Activated T-helper 1 cell treated with anti-CD3 and anti-CD28 coated beads, Interleukin-12 subunit alpha, Interleukin-12 subunit beta, Interleukin-2, Interleukin-4 antibody, amounts not matched to agents 30 ng/mL and 10 ng/mL and 1 ng/mL, durations not matched to agents 14 hours and 24 hours and 36 hours (primary cell): ENCODE measurements at regions of chr1 and their contacts with region 1.

Region 1: GRCh38 chr1:154335025-154335714 is 9.8 kb downstream of the ATP8B2 start:
- DNase-seq: peak; percentile 78
- H3K4me3 Mint-ChIP-seq: no peak overlapping the region
- H3K27ac Mint-ChIP-seq: peak overlapping the region; percentile 75
- H3K4me1 Mint-ChIP-seq: peaks cover 65% of the 10 kb centered on the region
- H3K27me3 Mint-ChIP-seq: no peaks in the 10 kb centered on the region

Region 2: GRCh38 chr1:154198756-154199562 is 136.2 kb before region 1 on chr1:
- intact Hi-C with region 1: loop called (anchors 1 kb)
- DNase-seq: no peak
- H3K4me3 Mint-ChIP-seq: no peak overlapping the region
- H3K27ac Mint-ChIP-seq: no peak overlapping the region
- H3K4me1 Mint-ChIP-seq: no peaks in the 10 kb centered on the region
- H3K27me3 Mint-ChIP-seq: peaks cover 6% of the 10 kb centered on the region

Region 3: DNA sequence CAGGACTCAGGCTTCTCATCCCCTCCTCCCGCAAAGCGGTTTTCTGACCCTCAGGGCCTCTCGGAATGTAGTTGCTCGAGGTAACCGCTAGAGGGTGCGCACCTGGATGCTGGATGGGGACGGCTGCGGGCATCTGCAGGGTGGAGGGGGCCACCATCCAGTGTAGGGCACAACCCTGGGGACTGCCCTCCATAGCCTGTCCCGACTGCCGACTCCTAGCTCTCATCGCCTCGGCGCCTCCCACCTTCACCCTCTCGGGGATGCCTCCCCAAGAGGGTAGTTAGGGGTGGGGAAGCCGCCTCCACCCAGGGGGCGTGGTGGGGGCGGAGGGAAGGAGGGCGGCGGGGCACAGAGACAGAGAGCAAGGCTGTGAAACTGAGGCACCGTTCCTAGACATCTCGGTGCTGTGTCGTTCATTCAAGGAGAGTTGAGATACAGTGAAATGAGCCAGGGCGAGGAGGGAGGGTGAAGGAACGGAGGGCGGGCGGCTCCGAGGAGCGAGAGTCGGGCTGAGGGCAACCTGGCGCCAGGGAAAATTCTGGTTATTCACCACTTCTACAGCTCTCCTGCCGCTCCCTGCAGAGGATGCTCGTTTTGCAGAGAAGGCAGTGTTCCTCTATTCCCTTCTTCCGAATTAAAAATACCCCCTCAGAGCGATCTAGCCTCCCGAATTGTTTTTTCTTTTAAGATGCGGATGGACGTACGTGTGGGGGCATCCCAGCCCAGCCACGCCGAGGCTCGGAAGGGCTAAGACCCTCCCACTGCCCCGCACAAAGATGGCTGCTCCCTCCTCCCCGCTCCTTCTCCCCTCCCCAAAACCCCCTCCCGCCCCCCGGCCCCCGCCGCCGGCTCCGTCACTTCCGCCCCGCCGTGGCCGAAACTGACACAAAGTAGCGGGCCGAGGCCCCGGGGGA is 10.2 kb before region 1 on chr1 and contains the start of gene ATP8B2:
- intact Hi-C with region 1: loop called (anchors 1 kb)
- DNase-seq: peak; percentile 74
- H3K4me3 Mint-ChIP-seq: peak within 1 kb of the TSS; percentile 96
- H3K27ac Mint-ChIP-seq: peak within 1 kb of the TSS; percentile 89
- H3K4me1 Mint-ChIP-seq: peaks cover 35% of the 10 kb centered on the region
- H3K27me3 Mint-ChIP-seq: peaks cover 22% of the 10 kb centered on the region
- total RNA-seq, gene ATP8B2: 50.1 and 54.9 TPM in 2 replicates

Region 4: GRCh38 chr1:154344977-154345837 is 10.0 kb after region 1 on chr1:
- intact Hi-C with region 1: loop called (anchors 1 kb)
- DNase-seq: peak; percentile 44
- H3K4me3 Mint-ChIP-seq: peak overlapping the region; percentile 63
- H3K27ac Mint-ChIP-seq: peak overlapping the region; percentile 67
- H3K4me1 Mint-ChIP-seq: peaks cover 54% of the 10 kb centered on the region
- H3K27me3 Mint-ChIP-seq: no peaks in the 10 kb centered on the region